ENCODE measurements at regions of chr3 and their contacts with region 1.

Region 1: GRCh38 chr3:53072653-53073552 is 27.0 kb upstream of the SFMBT1 start:
- DNase-seq: peak; percentile 95

Region 2: DNA sequence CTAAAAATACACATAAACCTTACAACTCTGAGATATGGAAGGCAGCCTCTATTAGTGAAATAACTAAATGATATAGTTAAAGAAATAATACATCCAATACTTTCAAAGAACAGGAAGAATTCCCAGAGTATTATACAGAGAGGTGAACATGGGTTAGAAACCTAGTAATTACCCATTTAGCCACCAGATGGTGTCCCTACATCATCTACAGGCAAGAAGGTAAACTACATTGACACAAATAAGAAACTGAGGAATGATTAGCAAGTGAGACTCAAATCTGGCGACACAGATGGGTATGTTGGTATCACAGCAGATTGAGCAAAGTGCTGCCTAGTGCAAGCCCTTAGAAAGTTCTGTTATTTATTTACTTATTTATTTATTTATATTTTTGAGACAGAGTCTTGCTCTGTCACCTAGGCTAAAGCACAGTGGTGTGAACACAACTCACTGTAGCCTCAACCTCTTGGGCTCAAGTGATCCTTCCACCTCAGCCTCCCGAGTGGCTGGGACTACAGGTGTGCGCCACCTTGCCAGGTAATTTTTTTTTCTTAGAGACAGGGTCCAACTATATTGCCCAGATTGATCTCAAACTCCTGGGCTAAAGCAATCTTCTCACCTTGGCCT is 330.4 kb before region 1 on chr3:
- intact Hi-C with region 1: loop called in 1 of 2 experiments (anchors 10 kb)
- DNase-seq: no peak

Region 3: DNA sequence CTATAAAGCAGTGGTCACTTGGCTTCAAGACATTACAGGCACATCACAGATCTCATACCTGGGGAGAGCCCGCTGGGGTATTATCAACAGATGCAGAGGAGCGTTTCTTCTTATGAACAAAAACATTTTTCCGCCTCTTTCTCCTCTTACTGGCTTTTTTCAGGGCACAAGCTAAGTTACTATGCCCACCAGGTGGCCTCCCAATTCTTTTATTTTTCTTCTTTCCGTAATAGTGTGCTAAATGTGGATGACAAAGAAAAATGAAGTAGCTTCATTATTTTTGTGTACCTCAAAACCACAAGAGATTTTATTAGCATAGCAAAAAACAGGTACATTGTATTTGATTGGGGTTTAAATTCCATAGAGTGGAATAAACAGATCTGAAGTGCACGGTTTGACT is 165.4 kb before region 1 on chr3:
- intact Hi-C with region 1: no loop called
- DNase-seq: no peak

Region 4: GRCh38 chr3:52959773-52960172 is 113.1 kb before region 1 on chr3:
- intact Hi-C with region 1: no loop called
- DNase-seq: no peak

Region 5: GRCh38 chr3:53236112-53236841 is 163.4 kb after region 1 on chr3:
- intact Hi-C with region 1: no loop called
- DNase-seq: peak; percentile 92